IMR-90 (cell line): ENCODE measurements at regions of chr1 and their contacts with region 1.

Region 1: DNA sequence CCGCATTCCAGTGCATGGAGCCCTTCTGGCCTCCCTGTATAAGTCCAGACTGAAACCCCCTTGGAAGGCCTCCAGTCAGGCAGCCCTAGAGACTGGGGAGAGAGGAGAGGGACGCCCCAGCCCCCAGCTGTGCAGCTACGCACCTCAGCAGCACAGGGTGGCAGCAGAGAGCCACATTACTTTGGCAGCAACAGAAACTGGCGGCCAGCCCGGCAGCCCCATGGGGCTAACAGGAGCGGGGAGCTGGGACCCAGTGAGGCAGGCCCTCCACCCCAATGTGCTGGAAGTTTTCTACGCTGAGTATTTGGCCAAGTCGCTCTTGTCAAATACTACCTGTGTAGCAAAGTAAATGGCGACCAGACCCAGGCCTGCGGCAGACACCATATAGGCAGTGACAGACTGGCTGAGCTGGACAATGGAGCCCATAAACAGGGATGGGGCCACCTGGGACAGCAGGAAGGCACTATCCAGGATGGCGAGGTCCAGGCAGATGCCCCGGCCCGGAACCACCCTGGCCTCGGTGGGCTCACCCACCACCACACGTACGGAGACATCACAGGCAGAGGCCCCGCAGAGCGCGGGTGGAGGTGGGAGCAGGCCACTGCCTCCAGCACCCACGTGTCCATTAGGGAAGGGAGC is 21.2 kb downstream of the SLC45A3 start:
- DNase-seq: peak; percentile 53
- ATAC-seq: peak; percentile 88
- H3K4me3 ChIP-seq: no peak overlapping the region
- H3K27ac ChIP-seq: no peak overlapping the region
- H3K4me1 ChIP-seq: no peaks in the 10 kb centered on the region; the same call in 1 of the 2 replicates
- H3K27me3 ChIP-seq: no peaks in the 10 kb centered on the region
- CTCF ChIP-seq: peak; percentile 91
- POLR2A ChIP-seq: no peak
- RAD21 ChIP-seq: peak; percentile 89

Region 2: GRCh38 chr1:205354259-205354904 is 304.7 kb before region 1 on chr1:
- CTCF ChIA-PET with region 1: interaction called, 4 read pairs
- POLR2A ChIA-PET with region 1: no interaction called
- dilution Hi-C with region 1: no loop called
- in situ Hi-C with region 1: no loop called
- intact Hi-C with region 1: loop called (anchors 10 kb)
- DNase-seq: peak; percentile 76
- ATAC-seq: peak; percentile 85
- H3K4me3 ChIP-seq: no peak overlapping the region
- H3K27ac ChIP-seq: no peak overlapping the region
- H3K4me1 ChIP-seq: no peaks in the 10 kb centered on the region; the same call in 1 of the 2 replicates
- H3K27me3 ChIP-seq: peaks cover 47% of the 10 kb centered on the region
- CTCF ChIP-seq: peak; percentile 90
- POLR2A ChIP-seq: no peak
- RAD21 ChIP-seq: peak; percentile 81

Region 3: GRCh38 chr1:205528887-205529825 is 129.9 kb before region 1 on chr1:
- CTCF ChIA-PET with region 1: interaction called, 11 read pairs
- POLR2A ChIA-PET with region 1: no interaction called
- dilution Hi-C with region 1: no loop called
- in situ Hi-C with region 1: loop called (anchors 5 kb)
- intact Hi-C with region 1: loop called (anchors 1 kb)
- DNase-seq: peak; percentile 50
- ATAC-seq: peak; percentile 95
- H3K4me3 ChIP-seq: no peak overlapping the region
- H3K27ac ChIP-seq: no peak overlapping the region
- H3K4me1 ChIP-seq: no peaks in the 10 kb centered on the region
- H3K27me3 ChIP-seq: peaks cover 26% of the 10 kb centered on the region
- CTCF ChIP-seq: peak; percentile 85
- POLR2A ChIP-seq: no peak
- RAD21 ChIP-seq: peak; percentile 89

Region 4: DNA sequence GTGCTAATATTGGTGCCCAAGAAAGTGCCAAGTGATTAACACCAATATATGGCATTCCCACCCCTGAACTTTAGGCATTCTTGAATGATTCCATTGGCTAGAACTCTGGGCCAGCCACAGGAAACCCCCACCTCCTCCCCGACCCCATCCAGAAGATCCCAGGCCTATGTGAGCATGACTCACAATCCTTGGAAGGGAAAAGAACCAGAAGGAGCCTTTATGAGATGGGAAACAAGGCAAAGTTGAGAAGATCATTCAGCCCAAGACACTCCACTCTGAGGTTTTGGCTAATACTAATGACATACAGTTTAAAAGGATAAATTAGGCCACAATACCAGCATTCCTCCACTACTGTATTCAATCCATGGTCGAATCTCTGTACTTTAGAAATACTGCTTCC is 49.0 kb before region 1 on chr1:
- CTCF ChIA-PET with region 1: no interaction called
- POLR2A ChIA-PET with region 1: no interaction called
- dilution Hi-C with region 1: no loop called
- in situ Hi-C with region 1: no loop called
- intact Hi-C with region 1: no loop called
- DNase-seq: peak; percentile 72
- ATAC-seq: peak; percentile 85
- H3K4me3 ChIP-seq: no peak overlapping the region
- H3K27ac ChIP-seq: no peak overlapping the region
- H3K4me1 ChIP-seq: peaks cover 2% of the 10 kb centered on the region; the same call in 1 of the 2 replicates
- H3K27me3 ChIP-seq: no peaks in the 10 kb centered on the region
- CTCF ChIP-seq: no peak
- POLR2A ChIP-seq: no peak
- RAD21 ChIP-seq: no peak

Region 5: GRCh38 chr1:205631727-205632373 is 27.2 kb before region 1 on chr1 and contains the start of gene ELK4:
- CTCF ChIA-PET with region 1: interaction called, 7 read pairs
- POLR2A ChIA-PET with region 1: no interaction called
- dilution Hi-C with region 1: no loop called
- in situ Hi-C with region 1: no loop called
- intact Hi-C with region 1: loop called (anchors 2 kb)
- DNase-seq: peak; percentile 98
- ATAC-seq: peak; percentile 92
- H3K4me3 ChIP-seq: peak within 1 kb of the TSS; percentile 99
- H3K27ac ChIP-seq: peak within 1 kb of the TSS; percentile 98
- H3K4me1 ChIP-seq: peaks cover 4% of the 10 kb centered on the region
- H3K27me3 ChIP-seq: no peaks in the 10 kb centered on the region
- CTCF ChIP-seq: peak; percentile 86
- POLR2A ChIP-seq: peak; percentile 95
- RAD21 ChIP-seq: peak; percentile 79
- total RNA-seq, gene ELK4: 11.3 and 15.6 TPM in 2 replicates

Region 6: DNA sequence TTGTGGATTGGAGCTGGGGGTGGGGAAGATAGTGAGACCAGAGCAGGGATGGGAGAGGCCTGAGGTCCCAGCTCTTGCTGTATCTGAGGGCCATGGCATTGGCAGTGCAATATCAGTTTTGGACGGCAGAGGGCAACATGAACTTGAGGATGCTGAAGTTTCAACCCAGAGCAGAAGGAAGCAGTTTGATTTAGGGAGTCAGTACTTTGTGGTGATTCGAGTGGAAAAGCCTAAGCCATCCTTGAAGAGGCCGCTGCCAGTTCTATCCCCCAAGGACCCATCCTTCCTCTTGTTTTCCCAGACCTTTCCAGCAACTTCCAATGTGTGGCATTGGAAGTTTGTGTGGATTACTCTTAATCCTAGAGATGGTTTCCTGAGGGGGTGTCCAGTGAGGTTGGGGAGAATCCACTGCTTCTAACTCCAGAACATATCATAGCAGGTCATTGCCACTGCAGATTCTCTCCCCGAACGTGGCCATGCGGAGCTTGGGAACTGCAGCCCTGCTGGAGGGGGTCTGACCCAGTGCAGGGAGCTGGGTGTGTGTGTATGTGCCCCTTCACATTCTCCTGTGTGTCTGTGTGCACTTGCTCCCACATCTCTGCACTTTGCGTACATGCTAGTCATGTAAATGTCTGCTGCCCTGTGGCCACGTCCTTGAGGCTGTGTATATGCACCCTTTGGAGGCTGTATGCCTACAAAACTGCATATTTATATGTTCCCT is 260.1 kb after region 1 on chr1:
- CTCF ChIA-PET with region 1: interaction called, 3 read pairs
- POLR2A ChIA-PET with region 1: no interaction called
- dilution Hi-C with region 1: no loop called
- in situ Hi-C with region 1: loop called (anchors 25 kb)
- intact Hi-C with region 1: loop called (anchors 5 kb)
- DNase-seq: peak; percentile 84
- ATAC-seq: peak; percentile 97
- H3K4me3 ChIP-seq: no peak overlapping the region
- H3K27ac ChIP-seq: no peak overlapping the region
- H3K4me1 ChIP-seq: no peaks in the 10 kb centered on the region
- H3K27me3 ChIP-seq: no peaks in the 10 kb centered on the region; the same call in 1 of the 2 replicates
- CTCF ChIP-seq: peak; percentile 96
- POLR2A ChIP-seq: peak; percentile 43; the same call in 1 of the 2 replicates
- RAD21 ChIP-seq: peak; percentile 97

Region 7: GRCh38 chr1:205983925-205984725 is 325.1 kb after region 1 on chr1:
- CTCF ChIA-PET with region 1: interaction called, 20 read pairs
- POLR2A ChIA-PET with region 1: no interaction called
- dilution Hi-C with region 1: no loop called
- in situ Hi-C with region 1: loop called (anchors 10 kb)
- intact Hi-C with region 1: no loop called
- DNase-seq: peak; percentile 55
- ATAC-seq: peak; percentile 99
- H3K4me3 ChIP-seq: no peak overlapping the region
- H3K27ac ChIP-seq: no peak overlapping the region
- H3K4me1 ChIP-seq: no peaks in the 10 kb centered on the region
- H3K27me3 ChIP-seq: no peaks in the 10 kb centered on the region
- CTCF ChIP-seq: peak; percentile 88
- POLR2A ChIP-seq: 0 out of 2 replicates have a peak, but pooled peaks have one; percentile 34
- RAD21 ChIP-seq: peak; percentile 87